Dorsolateral prefrontal cortex (tissue), 120 donors: ENCODE measurements at regions of chr12 and their contacts with region 1.

Region 1: GRCh38 chr12:111405149-111405860 is 418 bp upstream of the SH2B3 start:
- DNase-seq: peak; percentile 82 to 93 (median 88)
- H3K4me3 ChIP-seq: peak overlapping the region; percentile 57 to 97 (median 87)
- H3K27ac ChIP-seq: peak overlapping the region in 50 of 59 donors; percentile 26 to 93 (median 78)
- H3K27me3 ChIP-seq: no peaks in the 10 kb centered on the region
- CTCF ChIP-seq: peak in 53 of 56 donors; percentile 23 to 75 (median 58)

Region 2: DNA sequence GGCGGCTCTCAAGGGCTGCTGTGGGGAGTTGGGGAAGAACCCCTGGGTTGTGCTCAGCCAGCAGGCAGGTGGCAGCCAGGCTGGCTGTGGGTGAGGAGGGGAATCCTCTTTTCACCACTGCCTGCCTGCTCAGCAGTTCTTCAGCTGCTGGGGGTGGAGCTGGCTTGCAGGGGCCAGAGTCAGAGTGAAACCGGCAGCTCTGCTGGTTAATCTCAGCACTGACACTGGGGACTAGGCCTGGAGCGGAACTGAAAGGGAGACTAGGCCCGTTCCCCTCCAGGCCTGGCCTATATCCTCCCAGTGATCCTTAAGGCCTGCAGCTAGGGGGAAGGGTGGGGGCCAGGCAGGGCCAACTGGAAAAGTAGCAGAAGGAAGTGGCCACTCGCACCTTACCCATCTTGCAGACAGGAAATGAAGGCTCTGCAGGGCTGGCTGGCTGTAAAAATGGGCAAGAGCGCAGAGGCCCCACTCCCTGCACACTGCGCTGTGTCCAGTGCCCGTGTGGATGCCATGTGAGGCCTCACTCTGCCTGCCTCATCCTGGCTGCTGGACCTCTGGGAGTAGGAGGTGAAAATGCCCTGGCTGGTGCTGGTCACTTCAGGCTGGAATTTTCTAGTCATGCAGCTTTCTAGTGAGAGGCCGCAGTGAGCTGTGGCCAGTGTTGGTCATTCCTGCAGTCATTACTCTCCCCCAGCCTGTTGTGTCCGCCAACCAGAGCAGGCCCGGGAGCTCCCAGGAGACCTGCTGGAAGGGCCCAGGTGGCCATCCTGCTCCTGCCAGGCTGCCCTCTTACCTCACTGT is 39.8 kb after region 1 on chr12:
- intact Hi-C with region 1: loop called (anchors 2 to 5 kb)
- DNase-seq: peak in 8 of 10 donors; percentile 41 to 70 (median 56)
- H3K4me3 ChIP-seq: no peak overlapping the region
- H3K27ac ChIP-seq: peak overlapping the region in 56 of 59 donors; percentile 9 to 84 (median 69)
- H3K27me3 ChIP-seq: no peaks in the 10 kb centered on the region
- CTCF ChIP-seq: no peak

Region 3: DNA sequence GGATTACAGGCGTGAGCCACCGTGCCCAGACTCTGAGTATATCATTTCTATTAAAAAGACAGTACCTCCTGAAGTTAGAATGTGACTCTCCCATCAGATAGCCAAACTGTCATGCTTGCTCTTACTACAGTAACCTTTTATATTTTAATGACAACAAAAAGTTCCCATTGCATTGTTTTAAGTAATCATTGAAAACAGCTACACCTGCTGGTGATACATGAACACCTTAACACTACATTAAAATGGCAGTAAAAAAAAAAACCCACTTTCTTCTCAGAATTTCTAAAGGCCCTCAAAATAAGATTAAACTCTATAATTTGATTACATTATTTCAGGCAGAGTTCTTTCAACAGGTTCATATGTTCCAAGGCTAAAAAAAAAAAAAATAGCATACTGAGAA is 77.2 kb after region 1 on chr12:
- intact Hi-C with region 1: no loop called
- DNase-seq: no peak
- H3K4me3 ChIP-seq: no peak overlapping the region
- H3K27ac ChIP-seq: peak overlapping the region in 4 of 59 donors; percentile 5 to 22 (median 13)
- H3K27me3 ChIP-seq: no peaks in the 10 kb centered on the region
- CTCF ChIP-seq: peak in 18 of 56 donors; percentile 9 to 35 (median 20)